HCT116 (cell line): ENCODE measurements at regions of chr22 and their contacts with region 1.

Region 1: GRCh38 chr22:30754971-30755756 is 60.5 kb downstream of the OSBP2 start:
- DNase-seq: peak; percentile 66
- ATAC-seq: peak; percentile 96
- H3K4me3 ChIP-seq: no peak overlapping the region
- H3K27ac ChIP-seq: no peak overlapping the region
- H3K4me1 ChIP-seq: peaks cover 0 to 6% of the 10 kb centered on the region in 2 experiments; a peak in 1 of 4 replicates
- H3K27me3 ChIP-seq: no peaks in the 10 kb centered on the region
- CTCF ChIP-seq: peak; percentile 80 to 87 (median 82)
- POLR2A ChIP-seq: no peak
- RAD21 ChIP-seq: peak; percentile 97

Region 2: GRCh38 chr22:30606455-30607299 is 148.5 kb before region 1 on chr22 and contains the start of gene TCN2:
- CTCF ChIA-PET with region 1: interaction called, 11 read pairs
- POLR2A ChIA-PET with region 1: no interaction called
- RAD21 ChIA-PET with region 1: interaction called in 1 of 2 experiments, 6 read pairs
- intact Hi-C with region 1: loop called (anchors 10 kb)
- DNase-seq: no peak
- ATAC-seq: peak; percentile 59
- H3K4me3 ChIP-seq: peak within 1 kb of the TSS; percentile 51 to 68
- H3K27ac ChIP-seq: peak within 1 kb of the TSS; percentile 13; the same call in 1 of the 2 replicates
- H3K4me1 ChIP-seq: peaks cover 22 to 49% of the 10 kb centered on the region in 2 experiments
- H3K27me3 ChIP-seq: no peaks in the 10 kb centered on the region
- CTCF ChIP-seq: 0 out of 6 replicates have a peak, but pooled peaks of 1 of the 3 experiments have one; percentile 1
- POLR2A ChIP-seq: no peak
- RAD21 ChIP-seq: no peak
- total RNA-seq, gene TCN2: 2.2 TPM